ENCODE measurements at regions of chr15 and their contacts with region 1.

Region 1: DNA sequence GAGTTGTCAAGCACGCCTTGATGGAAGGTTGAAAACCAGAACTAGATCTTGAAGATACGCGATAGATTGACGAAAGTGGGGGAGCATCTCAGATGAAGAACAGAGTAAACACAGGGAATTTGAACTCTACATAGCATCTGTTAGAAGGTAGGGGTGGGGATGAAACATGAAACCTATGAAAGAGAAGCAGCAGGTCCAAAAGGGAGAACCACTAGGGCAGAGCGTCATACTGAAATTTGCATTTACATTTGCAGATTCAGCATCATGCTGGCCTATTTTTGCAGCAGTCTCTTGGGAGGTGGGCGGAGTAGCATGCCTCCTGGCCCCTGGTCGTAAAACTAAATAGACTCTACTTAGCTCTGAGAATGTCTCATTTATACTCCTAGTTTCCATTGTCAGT is 46.1 kb upstream of the RASGRP1 start:
- DNase-seq: peak in 8 of 9 donors; percentile 31 to 76 (median 54)
- ATAC-seq: peak; percentile 80
- H3K4me3 ChIP-seq: peak overlapping the region; percentile 2
- H3K4me3 Mint-ChIP-seq: peak overlapping the region; percentile 10 to 79 (median 40)
- H3K27ac ChIP-seq: peak overlapping the region; percentile 57
- H3K27ac Mint-ChIP-seq: peak overlapping the region; percentile 78 to 96 (median 88)
- H3K4me1 ChIP-seq: peaks cover 25 to 43% of the 10 kb centered on the region in 2 donors
- H3K4me1 Mint-ChIP-seq: peaks cover 28 to 75% (median 54%) of the 10 kb centered on the region in 7 donors
- H3K27me3 ChIP-seq: no peaks in the 10 kb centered on the region
- H3K27me3 Mint-ChIP-seq: no peaks in the 10 kb centered on the region

Region 2: GRCh38 chr15:38576837-38577236 is 33.9 kb before region 1 on chr15:
- CTCF ChIA-PET with region 1: no interaction called
- POLR2A ChIA-PET with region 1: interaction called, 3 read pairs
- intact Hi-C with region 1: loop called in 1 of 2 experiments (anchors 5 kb)
- DNase-seq: no peak
- ATAC-seq: peak; percentile 83
- H3K4me3 ChIP-seq: no peak overlapping the region
- H3K4me3 Mint-ChIP-seq: peak overlapping the region in 7 of 10 donors; percentile 8 to 68 (median 37)
- H3K27ac ChIP-seq: no peak overlapping the region
- H3K27ac Mint-ChIP-seq: peak overlapping the region in 3 of 9 donors; percentile 13 to 67 (median 43)
- H3K4me1 ChIP-seq: peaks cover 0 to 27% of the 10 kb centered on the region in 2 donors
- H3K4me1 Mint-ChIP-seq: peaks cover 16 to 50% (median 38%) of the 10 kb centered on the region in 7 donors
- H3K27me3 ChIP-seq: no peaks in the 10 kb centered on the region
- H3K27me3 Mint-ChIP-seq: peaks cover 0 to under 1% (median 0%) of the 10 kb centered on the region in 5 donors

Region 3: DNA sequence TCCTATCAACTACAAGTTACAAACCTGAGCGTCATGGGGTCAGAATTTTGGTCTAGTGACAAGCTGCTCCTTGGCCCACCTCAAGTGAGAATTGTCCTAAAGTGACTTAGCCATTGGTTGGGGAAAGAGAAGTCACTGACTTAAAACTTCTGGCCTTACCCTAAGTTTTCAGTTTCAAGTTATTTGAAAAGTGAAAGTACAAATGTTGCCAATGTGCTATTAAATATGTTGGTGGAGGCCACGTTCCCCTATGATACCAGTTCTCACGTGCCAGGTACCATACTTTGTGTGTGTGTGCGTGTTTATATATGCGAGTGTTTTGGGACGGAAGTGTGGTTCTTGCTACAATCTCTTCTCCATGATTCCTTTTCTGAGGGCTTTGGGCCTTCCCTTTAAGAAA is 23.5 kb before region 1 on chr15:
- CTCF ChIA-PET with region 1: no interaction called
- POLR2A ChIA-PET with region 1: no interaction called
- intact Hi-C with region 1: loop called in 1 of 2 experiments (anchors 2 kb)
- DNase-seq: peak in 2 of 9 donors; percentile 14 to 16
- ATAC-seq: no peak
- H3K4me3 ChIP-seq: peak overlapping the region; percentile 4
- H3K4me3 Mint-ChIP-seq: peak overlapping the region in 8 of 10 donors; percentile 2 to 62 (median 49)
- H3K27ac ChIP-seq: no peak overlapping the region
- H3K27ac Mint-ChIP-seq: peak overlapping the region; percentile 62 to 92 (median 82)
- H3K4me1 ChIP-seq: peaks cover 4 to 13% of the 10 kb centered on the region in 2 donors
- H3K4me1 Mint-ChIP-seq: peaks cover 0 to 35% (median 30%) of the 10 kb centered on the region in 7 donors
- H3K27me3 ChIP-seq: no peaks in the 10 kb centered on the region
- H3K27me3 Mint-ChIP-seq: peaks cover 0 to 4% (median 0%) of the 10 kb centered on the region in 5 donors

Region 4: DNA sequence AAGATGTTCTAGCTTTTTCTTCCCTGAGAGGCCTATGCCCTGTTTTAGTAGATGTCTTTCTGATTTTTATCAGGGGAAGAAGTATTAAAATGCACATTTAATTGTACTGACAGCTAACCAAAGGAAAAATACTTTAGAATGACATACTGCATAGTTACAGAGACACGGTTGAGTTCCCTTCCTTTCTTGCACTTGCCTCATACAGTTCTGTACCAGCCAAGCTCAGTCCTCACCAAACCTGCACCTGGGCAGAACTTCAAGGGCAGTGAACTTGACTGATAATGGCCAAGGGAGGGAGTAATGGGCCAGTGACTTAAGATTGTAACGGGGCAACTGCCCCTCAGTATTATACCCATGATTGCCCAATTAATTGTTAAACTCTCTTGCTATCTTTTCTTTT is 12.0 kb before region 1 on chr15:
- CTCF ChIA-PET with region 1: no interaction called
- POLR2A ChIA-PET with region 1: interaction called, 3 read pairs
- intact Hi-C with region 1: loop called in 1 of 2 experiments (anchors 2 kb)
- DNase-seq: no peak
- ATAC-seq: no peak
- H3K4me3 ChIP-seq: no peak overlapping the region
- H3K4me3 Mint-ChIP-seq: no peak overlapping the region
- H3K27ac ChIP-seq: no peak overlapping the region
- H3K27ac Mint-ChIP-seq: no peak overlapping the region
- H3K4me1 ChIP-seq: no peaks in the 10 kb centered on the region
- H3K4me1 Mint-ChIP-seq: peaks cover 0 to 13% (median 5%) of the 10 kb centered on the region in 7 donors
- H3K27me3 ChIP-seq: no peaks in the 10 kb centered on the region
- H3K27me3 Mint-ChIP-seq: peaks cover 0 to under 1% (median 0%) of the 10 kb centered on the region in 5 donors

Region 5: DNA sequence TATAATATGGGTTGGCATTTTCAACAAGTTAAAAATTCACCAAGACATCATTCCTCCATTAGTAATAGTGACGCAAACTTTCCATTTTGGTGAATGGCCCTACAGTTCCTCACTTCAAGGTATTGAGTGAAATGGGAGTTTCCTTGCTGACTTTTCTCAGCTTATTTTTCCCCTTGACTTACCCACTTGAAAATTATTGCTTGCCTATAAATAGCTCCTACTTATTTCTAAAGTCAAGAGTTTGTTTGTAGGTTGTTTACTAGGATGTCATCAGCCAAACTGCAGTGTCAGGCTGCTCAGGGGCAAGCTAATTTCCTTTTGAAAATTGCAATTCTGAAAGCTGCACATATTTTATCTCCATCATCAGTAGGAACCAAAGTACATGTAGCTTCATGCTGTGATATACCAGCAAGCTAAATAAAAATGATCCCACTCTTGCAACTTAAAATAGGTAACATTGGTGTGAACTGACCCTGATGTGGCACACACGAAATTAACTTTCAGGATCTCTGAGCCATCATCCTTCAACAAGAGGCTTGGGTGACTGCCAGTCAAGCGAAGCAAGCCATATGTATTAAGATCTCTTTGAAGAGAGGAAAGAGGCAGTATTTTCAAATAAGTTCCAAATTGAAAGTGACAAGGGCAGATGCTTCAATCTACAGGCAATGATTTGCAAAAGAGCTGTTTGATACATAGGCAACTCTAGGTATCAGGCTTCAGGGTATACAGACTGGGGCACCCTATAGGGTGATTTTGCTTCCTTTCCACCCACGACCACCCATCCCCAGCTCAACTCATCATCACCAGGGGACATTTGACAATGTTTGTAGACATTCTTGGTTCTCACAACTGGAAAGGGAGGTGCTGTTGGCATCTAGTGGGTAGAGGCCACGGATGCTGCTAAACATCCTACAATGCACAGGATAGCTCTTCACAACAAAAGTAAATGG is 20.7 kb after region 1 on chr15:
- CTCF ChIA-PET with region 1: interaction called, 5 read pairs
- POLR2A ChIA-PET with region 1: interaction called, 11 read pairs
- intact Hi-C with region 1: loop called in 1 of 2 experiments (anchors 2 kb)
- DNase-seq: peak in 3 of 9 donors; percentile 18 to 29 (median 28)
- ATAC-seq: no peak
- H3K4me3 ChIP-seq: peak overlapping the region; percentile 9
- H3K4me3 Mint-ChIP-seq: peak overlapping the region in 9 of 10 donors; percentile 12 to 67 (median 32)
- H3K27ac ChIP-seq: peak overlapping the region; percentile 22
- H3K27ac Mint-ChIP-seq: peak overlapping the region; percentile 60 to 92 (median 77)
- H3K4me1 ChIP-seq: peaks cover 3 to 20% of the 10 kb centered on the region in 2 donors
- H3K4me1 Mint-ChIP-seq: peaks cover 20 to 45% (median 41%) of the 10 kb centered on the region in 7 donors
- H3K27me3 ChIP-seq: no peaks in the 10 kb centered on the region
- H3K27me3 Mint-ChIP-seq: no peaks in the 10 kb centered on the region

Region 6: GRCh38 chr15:38652998-38653397 is 42.2 kb after region 1 on chr15:
- CTCF ChIA-PET with region 1: interaction called, 11 read pairs
- POLR2A ChIA-PET with region 1: interaction called, 7 read pairs
- intact Hi-C with region 1: loop called (anchors 1 to 2 kb)
- DNase-seq: peak; percentile 22 to 94 (median 93)
- ATAC-seq: peak; percentile 86
- H3K4me3 ChIP-seq: peak overlapping the region; percentile 45
- H3K4me3 Mint-ChIP-seq: peak overlapping the region; percentile 79 to 92 (median 84)
- H3K27ac ChIP-seq: peak overlapping the region; percentile 70
- H3K27ac Mint-ChIP-seq: peak overlapping the region; percentile 93 to 99 (median 96)
- H3K4me1 ChIP-seq: peaks cover 57 to 70% of the 10 kb centered on the region in 2 donors
- H3K4me1 Mint-ChIP-seq: peaks cover 41 to 93% (median 89%) of the 10 kb centered on the region in 7 donors
- H3K27me3 ChIP-seq: no peaks in the 10 kb centered on the region
- H3K27me3 Mint-ChIP-seq: no peaks in the 10 kb centered on the region

Region 7: GRCh38 chr15:38671675-38672254 is 61.0 kb after region 1 on chr15:
- CTCF ChIA-PET with region 1: no interaction called
- POLR2A ChIA-PET with region 1: interaction called, 4 read pairs
- intact Hi-C with region 1: loop called in 1 of 2 experiments (anchors 1 kb)
- DNase-seq: peak in 8 of 9 donors; percentile 55 to 84 (median 66)
- ATAC-seq: peak; percentile 79
- H3K4me3 ChIP-seq: peak overlapping the region; percentile 28
- H3K4me3 Mint-ChIP-seq: peak overlapping the region; percentile 27 to 86 (median 70)
- H3K27ac ChIP-seq: peak overlapping the region; percentile 90
- H3K27ac Mint-ChIP-seq: peak overlapping the region; percentile 93 to 100 (median 98)
- H3K4me1 ChIP-seq: peaks cover 73 to 74% of the 10 kb centered on the region in 2 donors
- H3K4me1 Mint-ChIP-seq: peaks cover 47 to 88% (median 80%) of the 10 kb centered on the region in 7 donors
- H3K27me3 ChIP-seq: no peaks in the 10 kb centered on the region
- H3K27me3 Mint-ChIP-seq: no peaks in the 10 kb centered on the region